ENCODE measurements at regions of chr4 and their contacts with region 1.

Region 1: GRCh38 chr4:40629401-40630334 is at the start of gene RBM47:
- DNase-seq: no peak
- ATAC-seq: peak; percentile 72
- H3K4me3 ChIP-seq: peak within 1 kb of the TSS; percentile 94
- H3K27ac ChIP-seq: peak within 1 kb of the TSS; percentile 92
- H3K4me1 ChIP-seq: peaks cover 10% of the 10 kb centered on the region
- H3K27me3 ChIP-seq: no peaks in the 10 kb centered on the region
- CTCF ChIP-seq: peak; percentile 21 to 27 (median 27); a peak in 3 of 6 replicates
- EP300 ChIP-seq: no peak
- POLR2A ChIP-seq: peak; percentile 61
- RAD21 ChIP-seq: 0 out of 2 replicates have a peak, but pooled peaks have one; percentile 2
- polyA plus RNA-seq, gene RBM47: 7.9 to 10.1 TPM

Region 2: DNA sequence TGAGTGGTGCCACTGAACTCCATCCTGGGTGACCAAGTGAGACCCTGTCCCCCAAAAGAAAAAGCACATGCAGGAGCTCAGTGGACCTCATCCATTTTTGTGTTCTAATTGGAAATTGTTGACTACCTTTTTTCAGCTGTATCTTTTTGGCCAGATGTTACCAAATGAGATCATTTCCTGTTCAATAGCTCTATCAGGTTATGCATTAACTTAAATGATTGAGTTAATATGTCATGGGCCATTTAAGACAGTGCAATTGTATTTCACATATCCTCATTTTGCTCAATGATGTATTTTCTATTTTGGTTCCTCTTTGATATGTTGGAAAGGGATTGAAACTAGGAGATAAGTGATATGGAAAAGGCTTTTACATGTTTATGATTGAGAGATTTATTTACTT is 459.1 kb before region 1 on chr4:
- CTCF ChIA-PET with region 1: no interaction called
- POLR2A ChIA-PET with region 1: no interaction called
- RAD21 ChIA-PET with region 1: no interaction called
- SMC1A ChIA-PET with region 1: no interaction called
- in situ Hi-C with region 1: no loop called
- intact Hi-C with region 1: no loop called
- DNase-seq: no peak
- ATAC-seq: peak; percentile 82
- H3K4me3 ChIP-seq: no peak overlapping the region
- H3K27ac ChIP-seq: no peak overlapping the region
- H3K4me1 ChIP-seq: peaks cover 21% of the 10 kb centered on the region
- H3K27me3 ChIP-seq: no peaks in the 10 kb centered on the region
- CTCF ChIP-seq: no peak
- EP300 ChIP-seq: peak; percentile 38 to 86; a peak in 3 of 4 replicates
- POLR2A ChIP-seq: no peak
- RAD21 ChIP-seq: no peak

Region 3: DNA sequence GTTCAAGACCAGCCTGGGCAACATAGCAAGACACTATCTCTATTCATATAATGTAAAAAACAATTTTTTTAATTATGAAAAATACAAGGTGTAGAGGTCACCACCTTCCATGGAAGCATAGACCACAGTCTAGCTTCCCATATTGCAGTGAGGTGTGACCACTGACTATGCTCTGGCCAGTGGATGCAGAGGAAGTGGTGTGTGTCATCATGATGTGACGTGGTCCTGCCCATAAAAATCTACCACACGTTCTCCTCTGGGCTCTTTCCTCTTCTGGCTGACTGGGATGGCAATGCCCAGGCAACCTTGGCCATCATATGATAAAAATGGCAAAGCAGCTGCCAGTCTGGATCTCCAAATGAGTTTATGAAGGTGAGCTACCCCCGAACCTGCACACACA is 65.7 kb before region 1 on chr4:
- CTCF ChIA-PET with region 1: interaction called, 5 read pairs
- POLR2A ChIA-PET with region 1: interaction called, 3 read pairs
- RAD21 ChIA-PET with region 1: interaction called, 6 read pairs
- SMC1A ChIA-PET with region 1: interaction called, 30 read pairs
- in situ Hi-C with region 1: no loop called
- intact Hi-C with region 1: loop called (anchors 5 kb)
- DNase-seq: no peak
- ATAC-seq: peak; percentile 14
- H3K4me3 ChIP-seq: no peak overlapping the region
- H3K27ac ChIP-seq: peak overlapping the region; percentile 50
- H3K4me1 ChIP-seq: peaks cover 68% of the 10 kb centered on the region
- H3K27me3 ChIP-seq: no peaks in the 10 kb centered on the region
- CTCF ChIP-seq: no peak
- EP300 ChIP-seq: no peak
- POLR2A ChIP-seq: 0 out of 2 replicates have a peak, but pooled peaks have one; percentile 23
- RAD21 ChIP-seq: no peak

Region 4: DNA sequence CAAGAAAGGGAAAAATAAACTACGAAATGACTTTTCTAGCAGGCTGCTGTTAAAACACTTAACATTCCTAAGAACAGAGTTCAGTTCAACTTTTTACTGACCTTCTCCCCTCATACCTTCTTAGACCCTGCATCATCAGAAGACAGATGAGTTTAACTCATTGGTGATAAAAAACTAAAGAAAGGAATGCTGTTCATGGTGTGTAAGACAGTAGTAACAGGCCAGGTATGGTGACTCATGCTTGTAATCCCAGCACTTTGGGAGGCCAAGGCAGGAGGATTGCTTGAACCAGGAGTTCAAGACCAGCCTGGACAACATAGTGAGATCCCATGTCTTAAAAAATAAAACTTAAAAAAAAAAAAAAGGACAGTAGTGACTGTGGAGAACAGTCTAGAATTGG is 16.2 kb before region 1 on chr4:
- CTCF ChIA-PET with region 1: interaction called, 3 read pairs
- POLR2A ChIA-PET with region 1: interaction called, 5 read pairs
- RAD21 ChIA-PET with region 1: interaction called, 4 read pairs
- SMC1A ChIA-PET with region 1: interaction called, 13 read pairs
- in situ Hi-C with region 1: no loop called
- intact Hi-C with region 1: no loop called
- DNase-seq: no peak
- ATAC-seq: no peak
- H3K4me3 ChIP-seq: no peak overlapping the region
- H3K27ac ChIP-seq: no peak overlapping the region
- H3K4me1 ChIP-seq: peaks cover 16% of the 10 kb centered on the region
- H3K27me3 ChIP-seq: no peaks in the 10 kb centered on the region
- CTCF ChIP-seq: no peak
- EP300 ChIP-seq: no peak
- POLR2A ChIP-seq: no peak
- RAD21 ChIP-seq: no peak

Region 5: GRCh38 chr4:40656201-40656901 is 26.7 kb after region 1 on chr4:
- CTCF ChIA-PET with region 1: interaction called, 5 read pairs
- POLR2A ChIA-PET with region 1: interaction called, 12 read pairs
- RAD21 ChIA-PET with region 1: interaction called, 24 read pairs
- SMC1A ChIA-PET with region 1: interaction called, 37 read pairs
- in situ Hi-C with region 1: no loop called
- intact Hi-C with region 1: loop called (anchors 2 kb)
- DNase-seq: peak; percentile 91
- ATAC-seq: peak; percentile 95
- H3K4me3 ChIP-seq: peak overlapping the region; percentile 35; the same call in 1 of the 2 replicates
- H3K27ac ChIP-seq: peak overlapping the region; percentile 97
- H3K4me1 ChIP-seq: peaks cover 35% of the 10 kb centered on the region
- H3K27me3 ChIP-seq: no peaks in the 10 kb centered on the region
- CTCF ChIP-seq: no peak
- EP300 ChIP-seq: peak in 1 of 2 experiments; percentile 79; a peak in 2 of 4 replicates
- POLR2A ChIP-seq: no peak
- RAD21 ChIP-seq: no peak

Region 6: GRCh38 chr4:41024556-41025491 is 395.2 kb after region 1 on chr4:
- CTCF ChIA-PET with region 1: no interaction called
- POLR2A ChIA-PET with region 1: no interaction called
- RAD21 ChIA-PET with region 1: no interaction called
- SMC1A ChIA-PET with region 1: no interaction called
- in situ Hi-C with region 1: no loop called
- intact Hi-C with region 1: no loop called
- DNase-seq: no peak
- ATAC-seq: no peak
- H3K4me3 ChIP-seq: no peak overlapping the region
- H3K27ac ChIP-seq: no peak overlapping the region
- H3K4me1 ChIP-seq: no peaks in the 10 kb centered on the region
- H3K27me3 ChIP-seq: no peaks in the 10 kb centered on the region
- CTCF ChIP-seq: no peak
- EP300 ChIP-seq: no peak
- POLR2A ChIP-seq: no peak
- RAD21 ChIP-seq: no peak